ENCODE measurements at regions of chr11 and their contacts with region 1.

Region 1: DNA sequence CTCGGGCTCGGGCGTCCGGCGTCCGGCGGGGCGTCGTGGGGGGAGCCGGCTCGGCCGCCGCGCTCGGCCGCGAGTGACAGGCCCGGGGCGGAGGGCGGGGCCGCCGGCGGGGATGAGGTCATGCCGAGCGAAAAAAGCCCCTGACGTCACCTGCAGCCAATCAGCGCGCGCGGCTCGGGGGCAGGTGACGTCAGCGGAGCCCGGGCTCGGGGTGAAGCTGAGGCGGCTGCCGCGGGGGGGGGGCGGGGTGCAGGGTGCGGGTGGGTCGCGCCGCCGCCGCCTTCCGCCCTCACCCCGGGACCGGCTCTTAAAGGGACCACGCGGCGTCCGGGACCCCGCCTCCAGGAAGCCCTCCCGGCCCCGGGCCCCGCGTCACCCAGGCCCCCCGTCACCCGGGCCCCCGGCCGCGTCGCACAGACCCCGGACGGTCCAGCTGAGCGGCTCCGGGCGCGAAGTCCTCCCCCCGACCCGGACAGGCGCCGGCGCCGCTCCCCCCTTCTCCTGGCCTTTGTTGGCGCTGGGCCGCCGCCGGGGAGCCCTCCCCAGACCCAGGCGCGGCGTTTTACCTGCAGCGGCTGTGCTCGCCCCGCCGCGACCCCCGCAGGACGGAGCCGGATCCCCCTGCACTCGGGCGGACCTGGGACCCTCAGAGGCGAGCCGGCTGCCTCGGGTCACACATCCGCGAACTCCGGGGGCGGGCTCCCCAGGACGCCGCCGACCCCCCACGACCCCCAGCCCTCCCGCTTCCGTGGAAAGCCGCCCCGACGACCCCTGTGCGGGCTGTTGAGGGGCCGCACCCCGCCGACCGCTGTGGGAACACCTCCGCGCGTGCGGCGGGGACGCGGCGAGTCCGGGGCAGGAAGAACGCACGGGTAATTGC is at the start of gene DUSP8:
- DNase-seq: peak; percentile 89
- H3K4me3 Mint-ChIP-seq: peak within 1 kb of the TSS; percentile 37
- H3K27ac Mint-ChIP-seq: no peak within 1 kb of the TSS
- H3K4me1 Mint-ChIP-seq: no peaks in the 10 kb centered on the region
- H3K27me3 Mint-ChIP-seq: peaks cover 28% of the 10 kb centered on the region
- total RNA-seq, gene DUSP8: 2.3 and 2.4 TPM in 2 replicates

Region 2: GRCh38 chr11:1202776-1203504 is 369.5 kb before region 1 on chr11:
- intact Hi-C with region 1: loop called (anchors 1 kb)
- DNase-seq: peak; percentile 49
- H3K4me3 Mint-ChIP-seq: no peak overlapping the region
- H3K27ac Mint-ChIP-seq: no peak overlapping the region
- H3K4me1 Mint-ChIP-seq: no peaks in the 10 kb centered on the region
- H3K27me3 Mint-ChIP-seq: no peaks in the 10 kb centered on the region

Region 3: GRCh38 chr11:1309498-1310317 is 262.7 kb before region 1 on chr11 and contains the start of gene TOLLIP:
- intact Hi-C with region 1: loop called (anchors 5 kb)
- DNase-seq: peak; percentile 97
- H3K4me3 Mint-ChIP-seq: peak within 1 kb of the TSS; percentile 82
- H3K27ac Mint-ChIP-seq: peak within 1 kb of the TSS; percentile 89
- H3K4me1 Mint-ChIP-seq: peaks cover 19% of the 10 kb centered on the region
- H3K27me3 Mint-ChIP-seq: peaks cover 28% of the 10 kb centered on the region
- total RNA-seq, gene TOLLIP: 37.4 and 42.9 TPM in 2 replicates

Region 4: GRCh38 chr11:1453611-1454034 is 118.8 kb before region 1 on chr11:
- intact Hi-C with region 1: loop called (anchors 1 kb)
- DNase-seq: peak; percentile 28
- H3K4me3 Mint-ChIP-seq: no peak overlapping the region
- H3K27ac Mint-ChIP-seq: no peak overlapping the region
- H3K4me1 Mint-ChIP-seq: no peaks in the 10 kb centered on the region
- H3K27me3 Mint-ChIP-seq: no peaks in the 10 kb centered on the region

Region 5: DNA sequence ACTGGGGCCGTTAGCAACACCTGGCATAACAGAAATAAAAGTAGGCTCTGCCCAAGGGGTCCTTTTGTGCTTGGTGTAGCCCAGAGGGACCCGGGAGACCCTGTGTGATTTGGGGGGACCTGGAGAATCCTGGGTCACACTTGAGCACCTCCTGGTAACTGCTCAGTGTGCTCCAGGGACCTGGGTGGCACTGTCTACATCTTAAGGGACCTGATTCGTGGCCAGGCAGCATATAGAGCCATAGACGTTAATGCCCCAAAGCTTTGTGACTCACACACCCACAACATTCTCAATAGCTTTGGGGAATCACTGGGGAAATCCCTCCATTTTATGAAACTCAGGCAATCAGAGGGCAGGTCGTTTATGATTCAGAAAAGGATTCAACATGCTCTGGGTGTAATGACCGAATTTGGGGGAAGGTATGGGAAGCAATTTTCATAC is 570.3 kb after region 1 on chr11:
- intact Hi-C with region 1: loop called (anchors 5 kb)
- DNase-seq: no peak
- H3K4me3 Mint-ChIP-seq: peak overlapping the region; percentile 50
- H3K27ac Mint-ChIP-seq: peak overlapping the region; percentile 71
- H3K4me1 Mint-ChIP-seq: peaks cover 12% of the 10 kb centered on the region
- H3K27me3 Mint-ChIP-seq: peaks cover 54% of the 10 kb centered on the region

Measured in activated T-helper 1 cell treated with anti-CD3 and anti-CD28 coated beads, Interleukin-12 subunit alpha, Interleukin-12 subunit beta, Interleukin-2, Interleukin-4 antibody, amounts not matched to agents 30 ng/mL and 10 ng/mL and 1 ng/mL, durations not matched to agents 14 hours and 24 hours and 36 hours (primary cell).